B cell (primary cell): ENCODE measurements at regions of chr5 and their contacts with region 1.

Region 1: DNA sequence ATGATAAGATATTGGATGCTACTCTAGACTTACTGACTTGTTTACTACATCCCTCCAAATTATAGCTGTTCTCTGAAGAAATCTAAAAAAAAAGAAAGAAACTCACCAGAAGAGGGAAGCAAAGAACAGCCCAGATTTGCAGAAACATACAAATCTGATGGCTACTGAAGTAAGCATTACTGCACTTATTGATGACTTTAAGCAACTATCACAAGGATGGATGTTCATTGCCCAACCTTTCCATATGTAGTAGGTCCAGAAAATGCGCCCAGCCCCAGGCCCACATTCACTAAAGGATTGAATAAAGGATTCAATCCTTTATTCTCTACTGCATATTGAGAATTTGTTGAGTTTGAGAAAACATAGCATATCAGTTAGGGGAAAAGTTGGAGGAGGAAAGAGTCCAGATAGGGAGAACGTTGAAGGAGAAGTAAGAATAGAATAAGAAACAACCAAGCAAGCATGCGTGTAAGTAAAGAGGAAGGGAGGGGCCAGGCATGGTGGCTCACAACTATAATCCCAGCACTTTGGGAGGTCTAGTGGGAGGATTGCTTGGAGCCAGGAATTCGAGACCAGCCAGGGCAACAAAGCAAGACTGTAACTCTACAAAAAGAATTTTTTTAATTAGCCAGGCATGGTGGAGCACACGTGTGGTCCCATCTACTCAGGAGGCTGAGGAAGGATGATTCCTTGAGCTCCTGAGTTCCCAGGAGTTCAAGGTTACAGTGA is 33.8 kb upstream of the DTWD2 start:
- DNase-seq: peak; percentile 68
- ATAC-seq: peak; percentile 62
- H3K4me3 ChIP-seq: peak overlapping the region in 1 of 5 experiments; percentile 7
- H3K4me3 Mint-ChIP-seq: peak overlapping the region; percentile 40
- H3K27ac ChIP-seq: peak overlapping the region; percentile 30 to 78
- H3K27ac Mint-ChIP-seq: peak overlapping the region; percentile 82
- H3K4me1 ChIP-seq: peaks cover 64 to 67% of the 10 kb centered on the region in 2 donors
- H3K4me1 Mint-ChIP-seq: peaks cover 65% of the 10 kb centered on the region
- H3K27me3 ChIP-seq: no peaks in the 10 kb centered on the region
- H3K27me3 Mint-ChIP-seq: no peaks in the 10 kb centered on the region
- CTCF ChIP-seq: peak; percentile 67

Region 2: GRCh38 chr5:119179857-119180641 is 157.9 kb after region 1 on chr5:
- CTCF ChIA-PET with region 1: interaction called, 4 read pairs
- POLR2A ChIA-PET with region 1: no interaction called
- intact Hi-C with region 1: loop called (anchors 10 kb)
- DNase-seq: no peak
- ATAC-seq: no peak
- H3K4me3 ChIP-seq: no peak overlapping the region
- H3K4me3 Mint-ChIP-seq: no peak overlapping the region
- H3K27ac ChIP-seq: no peak overlapping the region
- H3K27ac Mint-ChIP-seq: peak overlapping the region; percentile 22
- H3K4me1 ChIP-seq: peaks cover 3 to 18% of the 10 kb centered on the region in 2 donors
- H3K4me1 Mint-ChIP-seq: peaks cover 19% of the 10 kb centered on the region
- H3K27me3 ChIP-seq: no peaks in the 10 kb centered on the region
- H3K27me3 Mint-ChIP-seq: no peaks in the 10 kb centered on the region
- CTCF ChIP-seq: no peak

Region 3: GRCh38 chr5:119220576-119221197 is 198.5 kb after region 1 on chr5:
- CTCF ChIA-PET with region 1: interaction called, 12 read pairs
- POLR2A ChIA-PET with region 1: no interaction called
- intact Hi-C with region 1: loop called (anchors 5 kb)
- DNase-seq: peak; percentile 63
- ATAC-seq: peak; percentile 92
- H3K4me3 ChIP-seq: no peak overlapping the region
- H3K4me3 Mint-ChIP-seq: peak overlapping the region; percentile 21
- H3K27ac ChIP-seq: peak overlapping the region; percentile 37 to 72
- H3K27ac Mint-ChIP-seq: peak overlapping the region; percentile 16
- H3K4me1 ChIP-seq: peaks cover 15 to 17% of the 10 kb centered on the region in 2 donors
- H3K4me1 Mint-ChIP-seq: peaks cover 21% of the 10 kb centered on the region
- H3K27me3 ChIP-seq: no peaks in the 10 kb centered on the region
- H3K27me3 Mint-ChIP-seq: no peaks in the 10 kb centered on the region
- CTCF ChIP-seq: no peak

Region 4: DNA sequence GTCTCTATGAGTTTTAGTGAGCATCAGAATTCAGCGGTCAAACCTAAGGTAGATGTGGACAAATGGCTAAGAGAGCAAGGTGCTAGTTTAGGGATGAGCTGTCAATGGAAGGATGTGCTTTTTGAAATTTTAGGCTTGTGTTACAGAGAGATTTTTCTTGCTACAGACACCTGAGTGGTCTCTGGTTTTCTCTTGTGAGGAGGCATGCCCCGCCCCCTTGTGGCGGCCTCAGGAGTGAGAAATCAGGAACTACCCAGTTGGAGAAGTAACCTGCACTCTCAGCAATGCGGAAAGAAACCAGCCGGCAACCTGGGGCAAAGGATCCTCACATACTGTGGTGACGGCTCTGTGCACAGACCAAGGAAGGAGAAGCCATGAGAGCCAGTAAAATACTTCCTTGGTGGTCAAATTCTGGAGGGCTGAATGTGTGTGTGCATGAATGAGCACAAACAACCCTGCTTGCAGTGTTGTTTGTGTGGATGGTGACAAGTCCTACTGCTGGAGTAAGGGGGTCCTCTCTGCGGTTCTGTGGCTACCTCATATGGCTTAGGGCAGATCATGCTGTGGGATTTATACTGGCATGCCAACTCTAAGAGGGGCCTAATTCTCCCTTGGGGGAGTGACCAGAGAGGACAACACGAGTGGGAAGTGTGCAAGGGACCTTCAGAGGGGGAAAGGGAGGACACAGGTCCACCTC is 413.4 kb after region 1 on chr5:
- CTCF ChIA-PET with region 1: interaction called, 19 read pairs
- POLR2A ChIA-PET with region 1: no interaction called
- intact Hi-C with region 1: loop called (anchors 1 kb)
- DNase-seq: peak; percentile 89
- ATAC-seq: peak; percentile 92
- H3K4me3 ChIP-seq: peak overlapping the region in 1 of 5 experiments; percentile 5
- H3K4me3 Mint-ChIP-seq: peak overlapping the region; percentile 46
- H3K27ac ChIP-seq: no peak overlapping the region
- H3K27ac Mint-ChIP-seq: peak overlapping the region; percentile 5
- H3K4me1 ChIP-seq: peaks cover 14 to 20% of the 10 kb centered on the region in 2 donors
- H3K4me1 Mint-ChIP-seq: peaks cover 28% of the 10 kb centered on the region
- H3K27me3 ChIP-seq: no peaks in the 10 kb centered on the region
- H3K27me3 Mint-ChIP-seq: no peaks in the 10 kb centered on the region
- CTCF ChIP-seq: peak; percentile 82

Region 5: DNA sequence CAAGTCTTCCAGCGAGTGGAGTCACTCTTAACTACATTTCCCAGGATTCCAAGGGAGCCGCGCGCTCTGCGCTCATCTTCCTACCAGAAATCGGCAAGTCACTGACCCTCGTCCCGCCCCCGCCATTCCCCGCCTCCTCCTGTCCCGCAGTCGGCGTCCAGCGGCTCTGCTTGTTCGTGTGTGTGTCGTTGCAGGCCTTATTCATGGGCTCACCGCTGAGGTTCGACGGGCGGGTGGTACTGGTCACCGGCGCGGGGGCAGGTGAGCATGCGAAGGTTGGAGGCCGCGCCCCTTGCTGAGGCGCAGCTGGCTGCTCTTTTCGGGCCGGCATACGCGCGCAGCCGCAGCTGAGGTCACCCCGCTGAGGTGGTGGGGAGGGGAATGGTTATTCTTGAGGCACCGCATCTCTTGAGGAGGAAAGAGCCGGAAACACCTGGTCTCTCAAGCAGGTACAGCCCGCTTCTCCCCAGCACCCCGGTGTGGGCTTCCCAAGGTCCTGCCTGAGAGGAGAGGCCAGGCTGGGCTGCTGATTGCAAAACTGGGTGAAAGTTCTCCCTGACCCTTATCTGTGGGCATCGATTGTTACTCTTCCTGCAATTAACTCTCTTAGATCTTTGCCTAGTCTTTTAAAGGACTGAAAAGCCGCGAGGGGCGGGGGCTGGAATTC is 430.3 kb after region 1 on chr5 and contains the start of gene HSD17B4:
- CTCF ChIA-PET with region 1: no interaction called
- POLR2A ChIA-PET with region 1: no interaction called
- intact Hi-C with region 1: loop called (anchors 5 kb)
- DNase-seq: peak; percentile 92
- ATAC-seq: peak; percentile 93
- H3K4me3 ChIP-seq: peak within 1 kb of the TSS; percentile 69 to 89 (median 77)
- H3K4me3 Mint-ChIP-seq: peak within 1 kb of the TSS; percentile 96
- H3K27ac ChIP-seq: peak within 1 kb of the TSS; percentile 86 to 87
- H3K27ac Mint-ChIP-seq: peak within 1 kb of the TSS; percentile 97
- H3K4me1 ChIP-seq: peaks cover 32% of the 10 kb centered on the region in 2 donors
- H3K4me1 Mint-ChIP-seq: peaks cover 53% of the 10 kb centered on the region
- H3K27me3 ChIP-seq: no peaks in the 10 kb centered on the region
- H3K27me3 Mint-ChIP-seq: no peaks in the 10 kb centered on the region
- CTCF ChIP-seq: no peak
- total RNA-seq, gene HSD17B4: 112 and 114 TPM in 2 replicates